Activated B cell treated with CpG ODN at 0.5 μM for 24 hours (primary cell): ENCODE measurements at regions of chr1 and their contacts with region 1.

Region 1: GRCh38 chr1:110338886-110339406 is at the start of gene RBM15:
- DNase-seq: peak; percentile 82
- ATAC-seq: peak; percentile 72
- H3K4me3 Mint-ChIP-seq: no peak within 1 kb of the TSS
- H3K27ac Mint-ChIP-seq: no peak within 1 kb of the TSS
- H3K4me1 Mint-ChIP-seq: peaks cover 51% of the 10 kb centered on the region
- H3K27me3 Mint-ChIP-seq: no peaks in the 10 kb centered on the region
- CTCF ChIP-seq: no peak
- total RNA-seq, gene RBM15: 52.7 and 61.1 TPM in 2 replicates

Region 2: DNA sequence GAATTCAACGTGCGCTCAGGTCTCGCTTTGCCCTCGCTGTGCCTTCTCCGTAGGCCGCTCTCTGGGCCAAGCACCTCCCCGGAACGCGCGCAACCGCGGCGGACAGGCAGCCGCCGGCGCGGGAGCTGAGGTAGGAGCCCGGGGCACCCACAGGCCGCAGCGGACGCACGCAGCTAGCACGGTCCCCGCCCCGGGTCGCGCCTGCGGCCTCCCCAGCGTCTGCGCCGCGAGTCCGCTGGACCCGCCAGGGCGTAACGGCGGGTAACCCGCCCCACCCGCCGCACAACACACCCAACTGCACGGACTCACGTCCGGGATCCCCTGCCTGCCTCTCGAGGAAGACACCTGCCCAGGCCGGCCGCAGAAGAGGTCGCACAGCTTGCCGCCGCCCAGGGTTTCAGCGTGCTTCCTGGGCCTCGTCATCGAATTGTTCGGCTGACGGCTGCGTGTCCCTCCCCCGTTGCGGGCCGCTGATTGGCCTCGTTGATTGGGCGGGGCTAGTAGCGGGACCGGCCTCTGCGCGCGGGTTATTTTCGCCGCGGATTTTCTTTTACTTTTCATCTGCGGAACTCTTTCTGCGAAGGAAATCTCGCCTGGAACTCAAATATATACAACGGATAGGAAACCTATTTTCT is 1375.8 kb before region 1 on chr1 and contains the start of gene CLCC1:
- CTCF ChIA-PET with region 1: no interaction called
- POLR2A ChIA-PET with region 1: no interaction called
- intact Hi-C with region 1: loop called (anchors 5 kb)
- DNase-seq: peak; percentile 84
- ATAC-seq: peak; percentile 94
- H3K4me3 Mint-ChIP-seq: peak within 1 kb of the TSS; percentile 88
- H3K27ac Mint-ChIP-seq: peak within 1 kb of the TSS; percentile 91
- H3K4me1 Mint-ChIP-seq: peaks cover 35% of the 10 kb centered on the region
- H3K27me3 Mint-ChIP-seq: no peaks in the 10 kb centered on the region
- CTCF ChIP-seq: no peak
- total RNA-seq, gene CLCC1: 19.5 and 28.3 TPM in 2 replicates

Region 3: DNA sequence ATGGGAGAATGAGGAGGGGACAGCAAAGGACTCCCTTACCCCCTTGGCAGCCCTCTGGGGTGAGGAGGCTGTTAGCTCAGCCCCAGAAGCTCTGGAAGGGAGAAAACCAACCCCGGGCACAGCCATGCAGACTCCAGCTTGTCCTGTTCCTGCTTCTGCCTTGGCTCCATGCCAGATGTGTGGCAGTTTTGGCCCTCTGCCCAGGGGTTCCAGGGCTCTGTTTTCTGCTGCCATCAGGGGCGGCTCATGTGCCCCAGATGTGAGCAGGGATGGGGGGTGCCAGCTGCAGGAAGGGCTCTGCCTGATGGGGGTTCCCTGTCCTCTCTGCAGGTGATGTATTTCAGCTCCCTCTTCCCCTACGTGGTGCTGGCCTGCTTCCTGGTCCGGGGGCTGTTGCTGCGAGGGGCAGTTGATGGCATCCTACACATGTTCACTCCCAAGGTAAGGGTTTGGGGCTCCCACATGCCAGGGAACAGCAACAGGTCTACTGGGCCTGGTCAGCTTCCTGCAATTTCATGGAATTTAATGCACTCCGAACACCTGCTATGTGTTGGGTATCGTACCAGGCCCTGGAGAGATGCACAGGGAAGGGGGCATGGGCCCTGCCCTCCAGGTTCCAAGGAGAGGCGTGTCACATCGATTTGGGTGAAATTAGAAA is 162.5 kb before region 1 on chr1:
- CTCF ChIA-PET with region 1: no interaction called
- POLR2A ChIA-PET with region 1: no interaction called
- intact Hi-C with region 1: no loop called
- DNase-seq: no peak
- ATAC-seq: no peak
- H3K4me3 Mint-ChIP-seq: no peak overlapping the region
- H3K27ac Mint-ChIP-seq: no peak overlapping the region
- H3K4me1 Mint-ChIP-seq: no peaks in the 10 kb centered on the region
- H3K27me3 Mint-ChIP-seq: peaks cover 16% of the 10 kb centered on the region
- CTCF ChIP-seq: no peak

Region 4: GRCh38 chr1:110209715-110210603 is 129.0 kb before region 1 on chr1 and contains the start of gene KCNC4:
- CTCF ChIA-PET with region 1: interaction called, 87 read pairs
- POLR2A ChIA-PET with region 1: interaction called, 78 read pairs
- intact Hi-C with region 1: loop called (anchors 1 kb)
- DNase-seq: peak; percentile 85
- ATAC-seq: peak; percentile 89
- H3K4me3 Mint-ChIP-seq: peak within 1 kb of the TSS; percentile 92
- H3K27ac Mint-ChIP-seq: peak within 1 kb of the TSS; percentile 90
- H3K4me1 Mint-ChIP-seq: peaks cover 32% of the 10 kb centered on the region
- H3K27me3 Mint-ChIP-seq: peaks cover 2% of the 10 kb centered on the region
- CTCF ChIP-seq: no peak
- total RNA-seq, gene KCNC4: 8.5 and 9.8 TPM in 2 replicates

Region 5: GRCh38 chr1:110262846-110263631 is 75.9 kb before region 1 on chr1:
- CTCF ChIA-PET with region 1: no interaction called
- POLR2A ChIA-PET with region 1: no interaction called
- intact Hi-C with region 1: no loop called
- DNase-seq: no peak
- ATAC-seq: no peak
- H3K4me3 Mint-ChIP-seq: no peak overlapping the region
- H3K27ac Mint-ChIP-seq: no peak overlapping the region
- H3K4me1 Mint-ChIP-seq: peaks cover 7% of the 10 kb centered on the region
- H3K27me3 Mint-ChIP-seq: no peaks in the 10 kb centered on the region
- CTCF ChIP-seq: no peak

Region 6: DNA sequence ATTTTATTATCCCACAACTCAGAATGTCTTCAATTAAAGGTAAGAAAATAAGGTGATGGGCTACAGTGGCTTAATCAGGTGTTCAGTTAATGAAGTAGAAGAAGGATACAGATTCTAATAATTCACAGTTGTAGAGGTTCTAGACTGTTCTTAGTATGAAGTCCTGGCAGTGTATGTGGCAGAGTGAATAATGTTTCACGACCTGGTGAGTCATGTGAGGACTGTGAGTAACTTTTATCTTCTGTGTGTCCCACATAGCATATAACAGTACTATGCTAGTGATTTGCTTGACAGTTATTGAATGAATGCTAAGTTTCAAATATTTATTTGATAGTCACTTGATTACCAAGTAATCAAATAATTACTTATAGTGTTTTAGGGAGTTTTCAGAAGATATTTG is 31.9 kb after region 1 on chr1:
- CTCF ChIA-PET with region 1: interaction called, 4 read pairs
- POLR2A ChIA-PET with region 1: interaction called, 11 read pairs
- intact Hi-C with region 1: no loop called
- DNase-seq: no peak
- ATAC-seq: no peak
- H3K4me3 Mint-ChIP-seq: no peak overlapping the region
- H3K27ac Mint-ChIP-seq: no peak overlapping the region
- H3K4me1 Mint-ChIP-seq: peaks cover 7% of the 10 kb centered on the region
- H3K27me3 Mint-ChIP-seq: no peaks in the 10 kb centered on the region
- CTCF ChIP-seq: no peak

Region 7: DNA sequence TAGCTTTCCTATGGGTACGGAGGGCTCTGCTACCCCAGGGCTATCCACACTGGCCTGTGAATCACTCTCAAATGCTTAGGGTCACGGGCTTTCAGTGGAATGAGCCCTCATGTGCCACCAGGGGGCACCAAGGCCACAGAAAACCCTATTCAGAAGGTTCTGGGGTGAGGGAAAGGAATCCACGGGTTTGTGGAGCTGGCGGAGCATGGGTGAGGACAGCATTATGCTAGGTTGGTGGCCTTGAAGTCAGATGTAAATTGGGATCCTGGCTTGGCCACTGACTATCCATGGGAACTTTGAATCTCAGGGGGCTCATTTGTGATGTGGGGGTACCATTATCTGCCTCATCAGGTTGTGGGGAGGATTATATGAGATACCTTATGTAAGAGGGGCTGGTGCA is 73.6 kb after region 1 on chr1:
- CTCF ChIA-PET with region 1: interaction called, 79 read pairs
- POLR2A ChIA-PET with region 1: interaction called, 149 read pairs
- intact Hi-C with region 1: loop called (anchors 1 kb)
- DNase-seq: peak; percentile 56
- ATAC-seq: peak; percentile 66
- H3K4me3 Mint-ChIP-seq: peak overlapping the region; percentile 66
- H3K27ac Mint-ChIP-seq: peak overlapping the region; percentile 67
- H3K4me1 Mint-ChIP-seq: peaks cover 23% of the 10 kb centered on the region
- H3K27me3 Mint-ChIP-seq: no peaks in the 10 kb centered on the region
- CTCF ChIP-seq: no peak

Region 8: GRCh38 chr1:110872745-110873720 is 534.1 kb after region 1 on chr1 and contains the start of gene CD53:
- CTCF ChIA-PET with region 1: no interaction called
- POLR2A ChIA-PET with region 1: interaction called, 4 read pairs
- intact Hi-C with region 1: loop called (anchors 10 kb)
- DNase-seq: peak; percentile 27
- ATAC-seq: peak; percentile 64
- H3K4me3 Mint-ChIP-seq: peak within 1 kb of the TSS; percentile 96
- H3K27ac Mint-ChIP-seq: peak within 1 kb of the TSS; percentile 99
- H3K4me1 Mint-ChIP-seq: peaks cover 75% of the 10 kb centered on the region
- H3K27me3 Mint-ChIP-seq: no peaks in the 10 kb centered on the region
- CTCF ChIP-seq: no peak
- total RNA-seq, gene CD53: 491 and 522 TPM in 2 replicates

Region 9: DNA sequence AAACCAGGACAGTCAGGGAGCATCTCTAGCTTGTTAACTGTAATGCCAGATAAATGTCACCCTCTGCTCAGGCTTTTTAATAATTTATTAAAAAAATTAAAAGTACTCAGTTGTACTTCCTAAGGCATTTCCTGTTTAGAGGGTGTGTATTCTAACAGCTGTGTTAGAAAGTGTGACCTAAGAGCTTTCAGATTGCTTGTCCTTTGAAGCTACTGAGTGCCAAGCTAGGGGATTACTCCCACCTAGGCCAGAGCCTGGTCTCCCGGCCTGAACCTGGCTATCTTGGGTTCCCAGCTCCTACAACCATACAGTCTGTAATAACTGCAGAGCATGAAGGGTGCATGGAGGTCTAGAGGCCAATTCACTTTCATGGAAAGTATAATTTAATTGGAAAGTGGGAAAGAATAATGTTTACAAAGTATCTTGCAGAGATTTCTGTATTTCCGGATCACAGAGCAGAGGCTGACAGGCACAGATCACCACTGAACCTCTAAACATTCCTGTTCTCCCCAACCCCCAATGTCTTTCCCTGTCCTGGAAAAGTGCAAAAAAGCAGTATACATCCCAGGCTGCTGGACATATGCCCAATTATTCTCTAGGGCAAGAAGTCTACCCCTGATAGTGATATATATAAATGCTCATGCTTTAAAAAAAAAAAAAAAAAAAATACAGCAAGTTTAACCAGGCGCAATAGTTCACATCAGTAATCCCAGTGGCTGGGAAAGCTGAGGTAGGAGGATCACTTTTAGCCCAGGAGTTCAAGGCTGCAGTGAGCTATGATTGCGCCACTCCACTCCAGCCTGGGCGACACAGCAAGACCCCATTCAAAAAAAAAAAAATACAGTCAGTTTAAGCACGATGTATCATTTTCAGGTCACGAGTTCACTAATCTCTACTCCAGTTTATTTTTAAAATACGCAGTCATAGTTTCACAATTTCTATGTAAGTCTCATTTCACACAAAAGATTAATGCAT is 1244.0 kb after region 1 on chr1:
- CTCF ChIA-PET with region 1: no interaction called
- POLR2A ChIA-PET with region 1: no interaction called
- intact Hi-C with region 1: no loop called
- DNase-seq: no peak
- ATAC-seq: no peak
- H3K4me3 Mint-ChIP-seq: no peak overlapping the region
- H3K27ac Mint-ChIP-seq: no peak overlapping the region
- H3K4me1 Mint-ChIP-seq: peaks cover 8% of the 10 kb centered on the region
- H3K27me3 Mint-ChIP-seq: no peaks in the 10 kb centered on the region
- CTCF ChIP-seq: no peak